Activated T-helper 2 cell treated with anti-CD3 and anti-CD28 coated beads, Interferon-gamma antibody, Interleukin-2, Interleukin-4, amounts not matched to agents 10 μg/mL and 5 μg/mL and 100 μg/mL, durations not matched to agents 14 hours and 24 hours and 36 hours (primary cell): ENCODE measurements at regions of chr14 and their contacts with region 1.

Region 1: GRCh38 chr14:74084277-74085046 is at the starts of genes ALDH6A1 and LIN52:
- DNase-seq: peak; percentile 100
- H3K4me3 Mint-ChIP-seq: peak within 1 kb of the TSS; percentile 100
- H3K27ac Mint-ChIP-seq: peak within 1 kb of the TSS; percentile 99
- H3K4me1 Mint-ChIP-seq: peaks cover 40% of the 10 kb centered on the region
- H3K27me3 Mint-ChIP-seq: no peaks in the 10 kb centered on the region
- total RNA-seq, gene ALDH6A1: 14.8 and 17.6 TPM in 2 replicates
- total RNA-seq, gene LIN52: 16.7 and 19.0 TPM in 2 replicates

Region 2: DNA sequence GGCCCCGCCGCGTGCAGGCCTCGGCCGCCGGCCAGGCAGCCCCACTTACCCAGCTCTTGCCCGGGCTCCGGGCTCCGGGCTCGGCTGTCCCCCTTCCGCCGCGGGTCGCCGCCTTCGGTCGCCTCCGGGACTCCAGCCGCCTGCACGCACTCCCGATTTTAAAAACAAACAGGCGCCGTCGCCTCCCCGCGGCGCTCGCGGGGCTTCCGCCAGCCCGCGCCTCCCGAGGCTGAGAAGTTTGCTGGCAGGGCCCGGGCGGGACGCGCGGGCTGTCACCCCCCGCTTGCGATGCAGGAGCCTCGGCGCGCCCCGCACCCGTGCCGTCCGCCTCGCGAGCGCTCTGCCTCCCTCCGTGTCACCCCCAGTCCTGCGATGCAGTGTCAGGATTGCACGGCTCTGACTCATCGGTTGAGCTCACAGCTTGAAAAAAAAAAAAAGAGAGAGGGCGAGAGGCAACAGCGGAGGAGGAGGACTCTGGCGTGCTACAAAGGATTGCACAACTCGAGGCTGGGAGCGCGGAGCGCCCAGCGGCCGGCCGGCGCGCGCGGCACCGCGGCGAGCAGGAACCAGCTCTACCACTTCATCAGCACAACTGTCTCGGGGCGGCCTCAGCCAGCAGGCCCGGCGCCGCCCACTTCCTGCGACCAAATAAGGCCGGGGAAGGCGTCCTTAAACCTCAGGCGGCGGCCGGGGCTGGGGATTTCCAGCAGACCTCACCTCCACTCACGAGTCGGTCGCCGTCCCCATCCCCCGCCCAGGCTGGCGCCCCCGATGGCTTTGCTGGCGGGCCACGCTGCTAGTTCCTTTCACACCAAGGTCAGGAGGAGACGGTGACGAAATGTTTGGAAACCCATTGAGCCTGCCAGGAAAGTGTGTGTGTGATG is 324.5 kb before region 1 on chr14:
- intact Hi-C with region 1: loop called (anchors 2 kb)
- DNase-seq: peak; percentile 95
- H3K4me3 Mint-ChIP-seq: peak overlapping the region; percentile 83
- H3K27ac Mint-ChIP-seq: peak overlapping the region; percentile 94
- H3K4me1 Mint-ChIP-seq: peaks cover 75% of the 10 kb centered on the region
- H3K27me3 Mint-ChIP-seq: no peaks in the 10 kb centered on the region

Region 3: GRCh38 chr14:73886449-73887317 is 197.8 kb before region 1 on chr14 and contains the start of gene ZNF410:
- intact Hi-C with region 1: loop called (anchors 2 kb)
- DNase-seq: peak; percentile 84
- H3K4me3 Mint-ChIP-seq: peak within 1 kb of the TSS; percentile 84
- H3K27ac Mint-ChIP-seq: peak within 1 kb of the TSS; percentile 98
- H3K4me1 Mint-ChIP-seq: peaks cover 39% of the 10 kb centered on the region
- H3K27me3 Mint-ChIP-seq: no peaks in the 10 kb centered on the region
- total RNA-seq, gene ZNF410: 77.5 and 82.9 TPM in 2 replicates

Region 4: GRCh38 chr14:73949744-73950734 is 134.4 kb before region 1 on chr14 and contains the starts of genes COQ6 and FAM161B:
- intact Hi-C with region 1: loop called (anchors 1 kb)
- DNase-seq: peak; percentile 92
- H3K4me3 Mint-ChIP-seq: peak within 1 kb of the TSS; percentile 95
- H3K27ac Mint-ChIP-seq: peak within 1 kb of the TSS; percentile 79
- H3K4me1 Mint-ChIP-seq: peaks cover 8% of the 10 kb centered on the region
- H3K27me3 Mint-ChIP-seq: no peaks in the 10 kb centered on the region
- total RNA-seq, gene COQ6: 17.2 and 17.8 TPM in 2 replicates
- total RNA-seq, gene FAM161B: 0.57 and 0.68 TPM in 2 replicates

Region 5: GRCh38 chr14:74018586-74019407 is 65.7 kb before region 1 on chr14 and contains the starts of genes BBOF1 and ENTPD5:
- intact Hi-C with region 1: loop called (anchors 1 kb)
- DNase-seq: peak; percentile 86
- H3K4me3 Mint-ChIP-seq: peak within 1 kb of the TSS; percentile 97
- H3K27ac Mint-ChIP-seq: peak within 1 kb of the TSS; percentile 98
- H3K4me1 Mint-ChIP-seq: peaks cover 11% of the 10 kb centered on the region
- H3K27me3 Mint-ChIP-seq: peaks cover 2% of the 10 kb centered on the region
- total RNA-seq, gene BBOF1: 0.23 and 0.82 TPM in 2 replicates
- total RNA-seq, gene ENTPD5: 9.9 and 11.5 TPM in 2 replicates

Region 6: DNA sequence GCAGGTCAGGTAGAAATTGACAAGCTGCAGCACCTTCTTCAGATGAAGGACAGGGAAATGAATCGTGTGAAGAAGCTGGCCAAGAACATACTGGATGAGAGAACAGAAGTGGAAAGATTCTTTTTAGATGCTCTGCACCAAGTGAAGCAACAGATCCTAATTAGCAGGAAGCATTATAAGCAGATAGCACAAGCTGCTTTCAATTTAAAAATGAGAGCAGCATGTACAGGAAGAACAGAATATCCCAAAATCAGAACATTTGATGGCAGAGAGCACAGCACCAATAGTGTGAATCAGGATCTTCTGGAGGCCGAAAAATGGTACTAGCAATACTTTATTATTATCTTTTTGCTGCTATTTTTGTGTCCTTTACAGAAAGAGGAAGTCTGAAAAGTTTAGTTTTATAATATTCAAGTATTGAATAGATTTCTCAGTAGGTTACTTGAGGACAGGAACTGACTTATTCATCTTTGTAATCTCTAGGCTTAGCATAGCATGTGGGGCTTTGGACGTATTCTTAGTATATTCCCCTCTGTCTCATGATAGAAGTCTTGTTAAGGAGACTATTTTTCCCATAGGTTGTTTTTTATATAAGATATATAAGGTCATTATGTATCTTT is 34.5 kb before region 1 on chr14:
- intact Hi-C with region 1: no loop called
- DNase-seq: no peak
- H3K4me3 Mint-ChIP-seq: no peak overlapping the region
- H3K27ac Mint-ChIP-seq: no peak overlapping the region
- H3K4me1 Mint-ChIP-seq: no peaks in the 10 kb centered on the region
- H3K27me3 Mint-ChIP-seq: no peaks in the 10 kb centered on the region

Region 7: DNA sequence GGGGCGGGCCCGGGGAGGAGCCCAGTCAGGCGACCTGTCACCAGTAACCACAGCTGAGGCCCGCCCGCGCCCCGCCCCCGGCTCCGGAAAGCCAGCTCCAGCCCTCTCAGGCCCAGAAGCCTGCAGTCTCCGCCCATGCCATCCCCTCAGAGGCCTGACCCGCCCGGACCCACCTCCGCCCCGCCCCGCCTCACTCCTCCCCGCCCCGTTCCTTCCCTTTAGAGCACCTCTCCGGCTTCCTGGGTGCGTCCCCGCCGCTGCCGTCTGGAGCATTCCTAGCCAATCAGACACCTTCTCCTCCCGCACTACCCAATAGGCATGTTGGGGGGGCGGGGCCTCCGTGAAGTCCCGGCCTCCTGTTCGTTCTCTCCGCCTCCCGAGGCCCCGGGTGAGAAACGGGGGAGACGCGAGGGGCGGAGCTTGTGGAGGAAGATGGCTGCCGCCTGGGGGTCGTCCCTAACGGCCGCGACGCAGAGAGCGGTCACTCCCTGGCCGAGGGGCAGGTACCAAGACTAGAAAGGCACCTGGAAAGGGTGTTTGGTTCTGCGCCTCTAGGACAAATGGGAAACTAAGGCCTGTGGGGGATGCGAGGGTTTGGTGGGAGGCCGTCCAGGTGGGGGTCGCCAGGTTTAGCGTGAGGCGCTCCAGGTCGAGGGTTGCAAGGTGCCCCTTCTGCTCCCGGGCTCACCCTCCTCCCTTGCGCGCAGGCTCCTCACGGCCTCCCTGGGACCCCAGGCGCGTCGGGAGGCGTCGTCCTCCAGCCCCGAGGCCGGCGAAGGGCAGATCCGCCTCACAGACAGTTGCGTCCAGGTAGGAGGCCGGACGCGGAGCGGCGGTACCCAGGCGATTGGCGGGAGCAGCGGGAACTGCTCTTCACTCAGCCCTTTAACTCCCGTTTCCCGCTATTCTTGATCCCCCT is 409.1 kb after region 1 on chr14 and contains the start of gene ISCA2:
- intact Hi-C with region 1: loop called (anchors 1 kb)
- DNase-seq: peak; percentile 99
- H3K4me3 Mint-ChIP-seq: peak within 1 kb of the TSS; percentile 93
- H3K27ac Mint-ChIP-seq: peak within 1 kb of the TSS; percentile 89
- H3K4me1 Mint-ChIP-seq: peaks cover 21% of the 10 kb centered on the region
- H3K27me3 Mint-ChIP-seq: no peaks in the 10 kb centered on the region
- total RNA-seq, gene ISCA2: 23.9 and 25.3 TPM in 2 replicates